Breast epithelium (tissue), 4 donors: ENCODE measurements at regions of chr19 and their contacts with region 1.

Region 1: DNA sequence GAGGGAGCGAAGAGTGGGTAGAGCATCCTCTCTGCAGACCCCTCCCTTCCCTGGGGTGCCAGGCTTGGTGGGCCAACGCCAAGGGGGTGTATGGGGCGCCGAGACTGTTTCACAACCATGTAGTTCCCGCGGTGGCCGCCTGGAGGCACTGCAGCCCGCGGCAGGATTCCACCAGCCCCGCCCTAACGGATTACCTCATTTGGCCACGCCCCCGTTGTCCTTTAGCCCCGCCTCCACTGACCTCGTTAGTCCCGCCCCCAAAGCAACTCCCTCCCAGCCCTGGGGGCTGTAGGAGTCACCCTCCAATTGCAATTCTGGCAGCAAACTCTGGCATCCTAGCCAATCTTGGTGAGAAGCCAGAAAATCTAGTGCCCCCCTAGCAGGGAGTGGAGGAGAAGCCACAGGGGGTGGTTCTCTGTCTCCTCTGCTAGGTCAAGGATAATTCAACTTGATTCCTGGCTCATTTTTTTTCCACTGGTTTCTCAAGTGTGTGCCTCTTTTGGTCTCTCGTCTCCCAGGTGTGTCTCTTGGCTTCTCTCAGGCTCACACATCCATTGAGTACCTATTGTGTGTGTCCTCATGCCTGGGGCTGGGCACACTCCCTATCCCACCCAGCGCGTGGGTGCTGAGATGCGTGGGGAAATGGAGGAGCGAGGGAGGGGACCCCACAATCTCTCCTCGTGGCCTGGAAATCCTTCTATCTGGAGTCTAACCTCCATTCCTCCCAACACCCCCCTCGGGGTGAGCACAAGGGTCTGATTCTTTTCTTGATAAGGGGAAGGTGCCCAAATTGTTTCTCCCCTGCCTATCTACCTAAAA is 2.0 kb downstream of the OLFM2 start:
- DNase-seq: peak in 1 of 2 donors; percentile 77
- H3K4me3 ChIP-seq: no peak overlapping the region
- H3K27ac ChIP-seq: no peak overlapping the region
- H3K4me1 ChIP-seq: peaks cover 0 to 6% of the 10 kb centered on the region in 2 donors
- H3K27me3 ChIP-seq: peaks cover 0 to 5% of the 10 kb centered on the region in 2 donors
- CTCF ChIP-seq: peak; percentile 58 to 93 (median 74)
- POLR2A ChIP-seq: no peak

Region 2: DNA sequence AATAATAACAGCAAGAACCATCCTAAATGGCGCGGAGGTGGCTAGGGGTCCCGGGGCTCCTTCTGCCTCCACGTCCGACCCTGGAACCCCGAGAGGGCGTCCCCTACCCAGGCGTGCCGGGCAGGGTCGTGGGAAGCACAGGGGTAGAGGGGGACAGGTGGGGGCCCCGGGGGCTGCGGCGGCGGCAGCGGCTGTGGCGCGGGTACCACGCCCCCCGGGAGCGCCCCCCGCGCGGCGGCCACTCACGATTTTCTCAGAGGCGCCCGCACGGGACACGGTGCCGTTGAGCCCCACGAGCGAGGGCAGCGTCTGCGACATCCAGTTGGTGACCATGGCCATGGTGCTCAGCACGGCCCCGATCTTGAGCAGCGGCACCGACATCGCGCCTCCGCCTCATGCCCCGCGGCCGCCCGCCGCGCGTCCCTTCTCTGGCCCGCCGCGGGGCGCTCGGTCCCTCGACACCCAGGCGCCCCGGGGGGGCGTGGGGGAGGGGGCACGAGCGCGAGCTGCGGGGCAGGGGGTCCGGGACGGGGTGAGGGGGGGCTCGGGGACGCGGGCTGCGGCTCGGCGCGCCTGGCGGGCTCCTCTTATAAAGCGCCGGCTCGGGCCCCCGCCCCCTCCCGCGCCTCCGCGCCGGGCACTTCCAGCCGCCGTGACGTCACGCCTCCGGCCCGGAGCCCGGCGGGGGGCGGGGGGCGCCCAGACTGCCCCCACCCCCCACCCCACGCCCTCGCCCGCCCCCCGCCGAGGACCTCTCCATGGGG is 20.9 kb before region 1 on chr19:
- intact Hi-C with region 1: no loop called
- DNase-seq: no peak
- H3K4me3 ChIP-seq: peak overlapping the region; percentile 44 to 87 (median 65)
- H3K27ac ChIP-seq: no peak overlapping the region
- H3K4me1 ChIP-seq: no peaks in the 10 kb centered on the region
- H3K27me3 ChIP-seq: peaks cover 0 to 2% of the 10 kb centered on the region in 2 donors
- CTCF ChIP-seq: no peak
- POLR2A ChIP-seq: no peak

Region 3: GRCh38 chr19:9971166-9971897 is 37.0 kb after region 1 on chr19:
- intact Hi-C with region 1: no loop called
- DNase-seq: no peak
- H3K4me3 ChIP-seq: no peak overlapping the region
- H3K27ac ChIP-seq: no peak overlapping the region
- H3K4me1 ChIP-seq: no peaks in the 10 kb centered on the region
- H3K27me3 ChIP-seq: peaks cover 0 to 7% of the 10 kb centered on the region in 2 donors
- CTCF ChIP-seq: no peak
- POLR2A ChIP-seq: no peak

Region 4: GRCh38 chr19:10027158-10027693 is 92.9 kb after region 1 on chr19:
- intact Hi-C with region 1: loop called (anchors 1 kb)
- DNase-seq: no peak
- H3K4me3 ChIP-seq: peak overlapping the region in 2 of 3 donors; percentile 19 to 33
- H3K27ac ChIP-seq: no peak overlapping the region
- H3K4me1 ChIP-seq: peaks cover 0 to 4% of the 10 kb centered on the region in 2 donors
- H3K27me3 ChIP-seq: peaks cover 0 to 12% of the 10 kb centered on the region in 2 donors
- CTCF ChIP-seq: no peak
- POLR2A ChIP-seq: no peak